MCF 10A (cell line): ENCODE measurements at regions of chr6 and their contacts with region 1.

Region 1: GRCh38 chr6:116100419-116101301 is at the start of gene NT5DC1:
- DNase-seq: peak; percentile 86
- H3K4me3 Mint-ChIP-seq: peak within 1 kb of the TSS; percentile 93
- H3K27ac Mint-ChIP-seq: peak within 1 kb of the TSS; percentile 71
- H3K4me1 Mint-ChIP-seq: peaks cover 23% of the 10 kb centered on the region
- H3K27me3 Mint-ChIP-seq: no peaks in the 10 kb centered on the region
- CTCF ChIP-seq: peak; percentile 36
- total RNA-seq, gene NT5DC1: 16.5 and 27.6 TPM in 2 replicates

Region 2: GRCh38 chr6:115634887-115635286 is 465.8 kb before region 1 on chr6:
- CTCF ChIA-PET with region 1: no interaction called
- POLR2A ChIA-PET with region 1: no interaction called
- intact Hi-C with region 1: no loop called
- DNase-seq: no peak
- H3K4me3 Mint-ChIP-seq: no peak overlapping the region
- H3K27ac Mint-ChIP-seq: no peak overlapping the region
- H3K4me1 Mint-ChIP-seq: no peaks in the 10 kb centered on the region
- H3K27me3 Mint-ChIP-seq: peaks cover 17% of the 10 kb centered on the region
- CTCF ChIP-seq: no peak

Region 3: GRCh38 chr6:115691433-115691832 is 409.2 kb before region 1 on chr6:
- CTCF ChIA-PET with region 1: no interaction called
- POLR2A ChIA-PET with region 1: no interaction called
- intact Hi-C with region 1: no loop called
- DNase-seq: no peak
- H3K4me3 Mint-ChIP-seq: no peak overlapping the region
- H3K27ac Mint-ChIP-seq: no peak overlapping the region
- H3K4me1 Mint-ChIP-seq: no peaks in the 10 kb centered on the region
- H3K27me3 Mint-ChIP-seq: peaks cover 14% of the 10 kb centered on the region
- CTCF ChIP-seq: no peak

Region 4: GRCh38 chr6:116010790-116011401 is 89.8 kb before region 1 on chr6:
- CTCF ChIA-PET with region 1: interaction called, 88 read pairs
- POLR2A ChIA-PET with region 1: interaction called, 25 read pairs
- intact Hi-C with region 1: loop called (anchors 1 kb)
- DNase-seq: peak; percentile 81
- H3K4me3 Mint-ChIP-seq: no peak overlapping the region
- H3K27ac Mint-ChIP-seq: peak overlapping the region; percentile 75
- H3K4me1 Mint-ChIP-seq: peaks cover 27% of the 10 kb centered on the region
- H3K27me3 Mint-ChIP-seq: no peaks in the 10 kb centered on the region
- CTCF ChIP-seq: peak; percentile 81

Region 5: GRCh38 chr6:116036885-116037284 is 63.8 kb before region 1 on chr6:
- CTCF ChIA-PET with region 1: interaction called, 12 read pairs
- POLR2A ChIA-PET with region 1: interaction called, 3 read pairs
- intact Hi-C with region 1: no loop called
- DNase-seq: no peak
- H3K4me3 Mint-ChIP-seq: no peak overlapping the region
- H3K27ac Mint-ChIP-seq: no peak overlapping the region
- H3K4me1 Mint-ChIP-seq: peaks cover 14% of the 10 kb centered on the region
- H3K27me3 Mint-ChIP-seq: no peaks in the 10 kb centered on the region
- CTCF ChIP-seq: no peak

Region 6: GRCh38 chr6:116087437-116088027 is 13.1 kb before region 1 on chr6:
- CTCF ChIA-PET with region 1: interaction called, 29 read pairs
- POLR2A ChIA-PET with region 1: interaction called, 22 read pairs
- intact Hi-C with region 1: no loop called
- DNase-seq: peak; percentile 64
- H3K4me3 Mint-ChIP-seq: no peak overlapping the region
- H3K27ac Mint-ChIP-seq: peak overlapping the region; percentile 16
- H3K4me1 Mint-ChIP-seq: peaks cover 14% of the 10 kb centered on the region
- H3K27me3 Mint-ChIP-seq: no peaks in the 10 kb centered on the region
- CTCF ChIP-seq: no peak

Region 7: GRCh38 chr6:116210750-116211425 is 110.2 kb after region 1 on chr6:
- CTCF ChIA-PET with region 1: interaction called, 3 read pairs
- POLR2A ChIA-PET with region 1: interaction called, 13 read pairs
- intact Hi-C with region 1: no loop called
- DNase-seq: peak; percentile 94
- H3K4me3 Mint-ChIP-seq: peak overlapping the region; percentile 58
- H3K27ac Mint-ChIP-seq: peak overlapping the region; percentile 83
- H3K4me1 Mint-ChIP-seq: peaks cover 22% of the 10 kb centered on the region
- H3K27me3 Mint-ChIP-seq: no peaks in the 10 kb centered on the region
- CTCF ChIP-seq: no peak